Heart left ventricle (tissue), 16 donors: ENCODE measurements at regions of chr2 and their contacts with region 1.

Region 1: DNA sequence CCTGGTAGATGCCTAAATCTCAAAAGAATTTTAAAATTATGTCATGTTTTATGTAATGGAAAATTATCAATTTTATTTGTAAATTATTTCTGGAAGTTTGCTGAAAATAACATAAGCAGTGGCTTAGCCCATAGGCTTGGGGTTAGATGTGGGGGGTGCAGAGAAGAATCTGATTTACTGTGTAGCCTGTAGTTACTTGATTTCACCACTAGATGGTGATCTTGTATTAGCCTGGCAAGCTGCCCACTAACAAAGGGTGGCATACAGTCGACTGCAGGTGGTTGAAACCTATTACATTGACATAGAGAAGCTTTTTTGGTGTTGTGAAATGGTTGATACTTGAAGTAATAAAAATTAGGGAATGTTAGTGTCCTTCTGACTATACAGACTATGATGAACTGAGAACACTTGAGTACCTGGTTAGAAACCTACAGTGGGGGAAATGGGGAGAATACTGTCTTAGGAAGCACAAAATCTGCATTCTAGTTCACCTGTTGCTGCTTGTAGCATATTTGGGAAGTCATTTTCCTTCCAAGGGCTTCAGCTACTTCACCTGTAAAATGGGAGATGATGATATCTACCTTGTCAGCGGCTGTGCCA is 191.0 kb upstream of the LHCGR start:
- DNase-seq: peak in 2 of 5 donors; percentile 21 to 33
- ATAC-seq: peak; percentile 59 to 86 (median 78)
- H3K4me3 ChIP-seq: no peak overlapping the region
- H3K27ac ChIP-seq: no peak overlapping the region
- H3K4me1 ChIP-seq: peaks cover 0 to 16% (median 0%) of the 10 kb centered on the region in 12 donors
- H3K27me3 ChIP-seq: no peaks in the 10 kb centered on the region
- CTCF ChIP-seq: peak; percentile 83 to 94 (median 91)
- POLR2A ChIP-seq: no peak

Region 2: DNA sequence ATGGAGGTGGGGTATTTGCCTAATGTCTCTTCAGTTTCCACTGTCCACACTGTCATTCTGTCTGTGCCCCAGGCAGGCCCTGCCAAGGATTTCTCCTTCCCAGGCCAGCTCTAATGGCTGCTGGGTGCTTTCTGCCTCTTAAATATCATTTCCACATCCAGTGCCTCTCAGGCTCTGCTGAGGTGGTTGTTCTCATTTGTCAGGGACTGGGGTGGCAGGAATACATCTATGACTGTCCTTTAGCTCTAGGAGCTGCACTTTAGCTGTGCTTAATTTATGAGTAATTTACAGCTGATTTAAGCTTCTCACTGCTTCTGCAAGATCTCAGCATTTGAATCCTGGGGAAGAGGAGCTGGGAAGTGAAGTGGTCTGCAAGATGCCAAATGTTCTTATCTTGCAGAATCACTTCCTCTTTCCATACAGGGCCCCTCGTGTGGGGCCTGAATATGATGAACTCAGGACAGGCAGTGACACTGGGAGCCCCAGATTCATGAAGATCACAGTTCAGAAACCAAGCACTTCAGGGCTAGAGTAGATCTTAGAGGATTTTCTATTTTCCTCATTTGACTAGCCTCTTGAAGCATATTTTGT is 57.6 kb after region 1 on chr2:
- intact Hi-C with region 1: no loop called
- DNase-seq: no peak
- ATAC-seq: no peak
- H3K4me3 ChIP-seq: no peak overlapping the region
- H3K27ac ChIP-seq: no peak overlapping the region
- H3K4me1 ChIP-seq: peaks cover 0 to 7% (median 0%) of the 10 kb centered on the region in 12 donors
- H3K27me3 ChIP-seq: no peaks in the 10 kb centered on the region
- CTCF ChIP-seq: no peak
- POLR2A ChIP-seq: no peak

Region 3: DNA sequence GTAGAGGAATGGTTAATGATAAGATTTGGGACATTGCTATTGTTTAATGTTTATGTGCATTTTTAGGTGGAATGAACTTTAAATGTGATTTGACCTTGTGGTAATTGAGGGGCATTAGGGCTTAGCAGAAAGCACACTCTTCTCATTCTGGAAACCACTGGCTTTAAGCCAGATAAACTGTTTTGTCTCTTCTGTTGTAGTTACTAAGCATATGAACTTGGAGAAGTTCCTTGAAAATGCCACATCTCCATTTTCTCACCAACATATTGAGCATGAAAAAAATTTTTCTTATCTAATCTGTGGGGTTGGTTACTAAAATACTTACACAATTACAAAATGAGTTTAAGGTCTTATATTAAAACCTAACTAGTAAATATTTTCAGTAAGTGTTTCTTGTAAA is 278.6 kb after region 1 on chr2:
- intact Hi-C with region 1: loop called in 1 of 10 experiments (anchors 10 kb)
- DNase-seq: no peak
- ATAC-seq: no peak
- H3K4me3 ChIP-seq: no peak overlapping the region
- H3K27ac ChIP-seq: peak overlapping the region in 1 of 12 donors; percentile 19
- H3K4me1 ChIP-seq: peaks cover 0 to 9% (median 0%) of the 10 kb centered on the region in 12 donors
- H3K27me3 ChIP-seq: no peaks in the 10 kb centered on the region
- CTCF ChIP-seq: no peak
- POLR2A ChIP-seq: no peak

Region 4: DNA sequence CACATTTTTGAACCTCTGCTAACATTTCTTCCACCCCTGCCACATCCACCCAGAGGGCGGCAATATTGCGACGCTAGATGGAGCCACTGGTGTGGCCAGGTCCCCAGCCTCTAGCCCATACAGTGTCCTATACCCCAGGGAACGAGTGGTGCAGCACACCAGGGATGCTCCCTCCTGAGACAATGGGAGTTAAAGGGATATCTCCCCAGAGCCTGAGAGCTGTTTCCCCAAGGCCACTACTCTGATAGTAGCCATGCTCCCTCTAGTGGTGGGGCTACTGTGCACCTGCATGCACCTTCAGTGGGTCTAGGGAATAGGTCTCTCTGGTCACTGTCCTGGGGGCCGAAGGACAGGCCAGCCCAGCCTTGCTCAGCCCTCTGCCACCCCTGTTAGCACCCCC is 544.2 kb after region 1 on chr2:
- intact Hi-C with region 1: loop called in 1 of 10 experiments (anchors 5 kb)
- DNase-seq: peak in 3 of 5 donors; percentile 18 to 47 (median 23)
- ATAC-seq: peak in 2 of 4 donors; percentile 50 to 62
- H3K4me3 ChIP-seq: no peak overlapping the region
- H3K27ac ChIP-seq: no peak overlapping the region
- H3K4me1 ChIP-seq: no peaks in the 10 kb centered on the region
- H3K27me3 ChIP-seq: no peaks in the 10 kb centered on the region
- CTCF ChIP-seq: peak; percentile 19 to 46 (median 38)
- POLR2A ChIP-seq: no peak

Region 5: GRCh38 chr2:50143822-50144575 is 1197.5 kb after region 1 on chr2:
- intact Hi-C with region 1: loop called in 7 of 10 experiments (anchors 5 to 10 kb)
- DNase-seq: peak in 1 of 5 donors; percentile 10
- ATAC-seq: peak in 3 of 4 donors; percentile 78 to 89 (median 80)
- H3K4me3 ChIP-seq: peak overlapping the region in 10 of 12 donors; percentile 8 to 57 (median 40)
- H3K27ac ChIP-seq: peak overlapping the region in 4 of 12 donors; percentile 28 to 47 (median 40)
- H3K4me1 ChIP-seq: peaks cover 0 to 4% (median 0%) of the 10 kb centered on the region in 12 donors
- H3K27me3 ChIP-seq: no peaks in the 10 kb centered on the region
- CTCF ChIP-seq: peak in 11 of 12 donors; percentile 41 to 70 (median 61)
- POLR2A ChIP-seq: no peak

Region 6: GRCh38 chr2:50492477-50492851 is 1545.9 kb after region 1 on chr2:
- intact Hi-C with region 1: loop called in 3 of 10 experiments (anchors 10 kb)
- DNase-seq: peak in 3 of 5 donors; percentile 15 to 26 (median 20)
- ATAC-seq: peak in 3 of 4 donors; percentile 72 to 88 (median 76)
- H3K4me3 ChIP-seq: peak overlapping the region in 7 of 12 donors; percentile 3 to 44 (median 20)
- H3K27ac ChIP-seq: no peak overlapping the region
- H3K4me1 ChIP-seq: peaks cover 0 to 13% (median 6%) of the 10 kb centered on the region in 12 donors
- H3K27me3 ChIP-seq: peaks cover 0 to 16% (median 0%) of the 10 kb centered on the region in 9 donors
- CTCF ChIP-seq: peak; percentile 49 to 80 (median 68)
- POLR2A ChIP-seq: no peak